Activated T-helper 1 cell treated with anti-CD3 and anti-CD28 coated beads, Interleukin-12 subunit alpha, Interleukin-12 subunit beta, Interleukin-2, Interleukin-4 antibody, amounts not matched to agents 30 ng/mL and 10 ng/mL and 1 ng/mL, durations not matched to agents 14 hours and 24 hours and 36 hours (primary cell): ENCODE measurements at regions of chr6 and their contacts with region 1.

Region 1: GRCh38 chr6:18264219-18264922 is at the start of gene DEK:
- DNase-seq: peak; percentile 77
- H3K4me3 Mint-ChIP-seq: peak within 1 kb of the TSS; percentile 87
- H3K27ac Mint-ChIP-seq: peak within 1 kb of the TSS; percentile 91
- H3K4me1 Mint-ChIP-seq: peaks cover 48% of the 10 kb centered on the region
- H3K27me3 Mint-ChIP-seq: peaks cover 4% of the 10 kb centered on the region
- total RNA-seq, gene DEK: 163 and 170 TPM in 2 replicates

Region 2: GRCh38 chr6:17015144-17015543 is 1249.2 kb before region 1 on chr6:
- intact Hi-C with region 1: loop called (anchors 10 kb)
- DNase-seq: peak; percentile 14
- H3K4me3 Mint-ChIP-seq: peak overlapping the region; percentile 16
- H3K27ac Mint-ChIP-seq: no peak overlapping the region
- H3K4me1 Mint-ChIP-seq: peaks cover 17% of the 10 kb centered on the region
- H3K27me3 Mint-ChIP-seq: peaks cover 50% of the 10 kb centered on the region

Region 3: DNA sequence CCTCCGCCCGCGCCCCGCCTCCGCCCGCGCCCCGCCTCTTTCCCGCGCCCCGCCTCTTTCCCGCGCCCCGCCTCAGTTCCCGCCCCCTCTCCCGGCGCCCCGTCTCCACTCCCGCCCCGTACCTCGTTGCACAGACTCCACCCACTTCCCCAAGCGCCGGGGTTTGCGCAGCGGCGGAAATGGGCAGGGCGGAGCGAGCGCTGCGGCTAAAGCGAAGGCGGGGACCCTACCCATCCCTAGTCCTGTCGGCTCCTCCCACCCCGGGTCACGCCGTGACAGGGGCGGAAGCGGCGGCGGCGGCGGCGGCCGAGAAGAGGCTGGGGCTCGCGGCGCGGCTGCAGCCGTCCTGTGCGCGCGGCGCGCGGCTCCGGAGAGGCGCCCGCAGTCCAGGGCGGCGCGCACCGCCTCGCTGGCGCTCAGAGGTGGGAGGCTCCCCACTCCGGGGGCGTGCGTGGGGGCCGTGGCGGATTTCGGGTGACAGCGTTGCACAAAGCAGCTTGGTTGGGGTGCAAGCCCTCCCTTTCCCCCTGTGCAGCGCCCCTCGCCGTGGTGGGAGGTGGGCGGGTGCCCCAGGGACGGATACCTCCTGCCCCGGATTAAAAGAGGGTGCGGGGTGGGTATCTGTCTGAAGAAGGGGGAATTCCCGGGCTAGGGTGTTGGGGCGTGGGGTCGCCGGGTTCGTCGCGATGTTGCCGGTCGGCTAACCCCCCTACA is 109.1 kb before region 1 on chr6 and contains the start of gene KDM1B:
- intact Hi-C with region 1: loop called (anchors 1 kb)
- DNase-seq: peak; percentile 99
- H3K4me3 Mint-ChIP-seq: peak within 1 kb of the TSS; percentile 92
- H3K27ac Mint-ChIP-seq: peak within 1 kb of the TSS; percentile 92
- H3K4me1 Mint-ChIP-seq: peaks cover 24% of the 10 kb centered on the region
- H3K27me3 Mint-ChIP-seq: peaks cover 9% of the 10 kb centered on the region
- total RNA-seq, gene KDM1B: 7.1 and 7.2 TPM in 2 replicates

Region 4: GRCh38 chr6:18211338-18211737 is 53.0 kb before region 1 on chr6:
- intact Hi-C with region 1: loop called (anchors 5 kb)
- DNase-seq: peak; percentile 7
- H3K4me3 Mint-ChIP-seq: no peak overlapping the region
- H3K27ac Mint-ChIP-seq: no peak overlapping the region
- H3K4me1 Mint-ChIP-seq: peaks cover 14% of the 10 kb centered on the region
- H3K27me3 Mint-ChIP-seq: no peaks in the 10 kb centered on the region

Region 5: GRCh38 chr6:18242062-18242851 is 22.1 kb before region 1 on chr6:
- intact Hi-C with region 1: loop called (anchors 1 kb)
- DNase-seq: no peak
- H3K4me3 Mint-ChIP-seq: peak overlapping the region; percentile 49
- H3K27ac Mint-ChIP-seq: peak overlapping the region; percentile 29
- H3K4me1 Mint-ChIP-seq: peaks cover 58% of the 10 kb centered on the region
- H3K27me3 Mint-ChIP-seq: no peaks in the 10 kb centered on the region

Region 6: GRCh38 chr6:18488526-18489270 is 224.3 kb after region 1 on chr6:
- intact Hi-C with region 1: loop called (anchors 1 kb)
- DNase-seq: no peak
- H3K4me3 Mint-ChIP-seq: no peak overlapping the region
- H3K27ac Mint-ChIP-seq: no peak overlapping the region
- H3K4me1 Mint-ChIP-seq: peaks cover 12% of the 10 kb centered on the region
- H3K27me3 Mint-ChIP-seq: peaks cover 13% of the 10 kb centered on the region